SK-N-SH (cell line): ENCODE measurements at regions of chr1 and their contacts with region 1.

Region 1: GRCh38 chr1:23670709-23671108 is 20.9 kb upstream of the RPL11 start:
- DNase-seq: no peak
- H3K4me3 ChIP-seq: no peak overlapping the region
- H3K27ac ChIP-seq: no peak overlapping the region
- H3K4me1 ChIP-seq: no peaks in the 10 kb centered on the region
- H3K27me3 ChIP-seq: no peaks in the 10 kb centered on the region; the same call in 1 of the 2 replicates
- CTCF ChIP-seq: no peak
- EP300 ChIP-seq: no peak
- RAD21 ChIP-seq: no peak

Region 2: GRCh38 chr1:23691499-23692307 is 21.0 kb after region 1 on chr1 and contains the start of gene RPL11:
- CTCF ChIA-PET with region 1: interaction called, 15 read pairs
- POLR2A ChIA-PET with region 1: no interaction called
- DNase-seq: peak; percentile 94
- H3K4me3 ChIP-seq: peak within 1 kb of the TSS; percentile 96 to 98
- H3K27ac ChIP-seq: peak within 1 kb of the TSS; percentile 82 to 92
- H3K4me1 ChIP-seq: peaks cover 19 to 34% of the 10 kb centered on the region in 2 experiments; a peak in 3 of 4 replicates
- H3K27me3 ChIP-seq: no peaks in the 10 kb centered on the region
- CTCF ChIP-seq: peak; percentile 70
- EP300 ChIP-seq: peak in 1 of 2 experiments; percentile 36; a peak in 2 of 4 replicates
- RAD21 ChIP-seq: peak; percentile 35
- polyA plus RNA-seq, gene RPL11: 2,231 and 2,255 TPM in 2 replicates

Region 3: DNA sequence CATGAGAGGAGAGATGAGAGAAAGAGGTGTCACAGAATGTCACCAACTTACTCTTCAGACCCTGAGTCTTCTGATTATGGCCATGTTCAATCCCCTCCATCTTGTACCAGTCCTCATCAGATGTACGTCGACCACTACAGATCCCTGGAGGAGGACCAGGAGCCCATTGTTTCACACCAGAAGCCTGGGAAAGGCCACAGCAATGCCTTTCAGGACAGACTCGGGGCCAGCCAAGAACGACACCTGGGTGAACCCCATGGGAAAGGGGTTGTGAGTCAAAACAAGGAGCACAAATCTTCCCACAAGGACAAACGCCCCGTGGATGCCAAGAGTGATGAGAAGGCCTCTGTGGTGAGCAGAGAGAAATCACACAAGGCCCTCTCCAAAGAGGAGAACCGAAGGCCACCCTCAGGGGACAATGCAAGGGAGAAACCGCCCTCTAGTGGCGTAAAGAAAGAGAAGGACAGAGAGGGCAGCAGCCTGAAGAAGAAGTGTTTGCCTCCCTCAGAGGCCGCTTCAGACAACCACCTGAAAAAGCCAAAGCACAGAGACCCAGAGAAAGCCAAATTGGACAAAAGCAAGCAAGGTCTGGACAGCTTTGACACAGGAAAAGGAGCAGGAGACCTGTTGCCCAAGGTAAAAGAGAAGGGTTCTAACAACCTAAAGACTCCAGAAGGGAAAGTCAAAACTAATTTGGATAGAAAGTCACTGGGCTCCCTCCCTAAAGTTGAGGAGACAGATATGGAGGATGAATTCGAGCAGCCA is 80.5 kb after region 1 on chr1:
- CTCF ChIA-PET with region 1: no interaction called
- POLR2A ChIA-PET with region 1: no interaction called
- DNase-seq: peak; percentile 67
- H3K4me3 ChIP-seq: no peak overlapping the region
- H3K27ac ChIP-seq: no peak overlapping the region
- H3K4me1 ChIP-seq: peaks cover 0 to 10% of the 10 kb centered on the region in 2 experiments; a peak in 1 of 4 replicates
- H3K27me3 ChIP-seq: no peaks in the 10 kb centered on the region
- CTCF ChIP-seq: peak; percentile 74
- EP300 ChIP-seq: no peak
- RAD21 ChIP-seq: peak; percentile 65